ENCODE measurements at regions of chr12 and their contacts with region 1.

Region 1: DNA sequence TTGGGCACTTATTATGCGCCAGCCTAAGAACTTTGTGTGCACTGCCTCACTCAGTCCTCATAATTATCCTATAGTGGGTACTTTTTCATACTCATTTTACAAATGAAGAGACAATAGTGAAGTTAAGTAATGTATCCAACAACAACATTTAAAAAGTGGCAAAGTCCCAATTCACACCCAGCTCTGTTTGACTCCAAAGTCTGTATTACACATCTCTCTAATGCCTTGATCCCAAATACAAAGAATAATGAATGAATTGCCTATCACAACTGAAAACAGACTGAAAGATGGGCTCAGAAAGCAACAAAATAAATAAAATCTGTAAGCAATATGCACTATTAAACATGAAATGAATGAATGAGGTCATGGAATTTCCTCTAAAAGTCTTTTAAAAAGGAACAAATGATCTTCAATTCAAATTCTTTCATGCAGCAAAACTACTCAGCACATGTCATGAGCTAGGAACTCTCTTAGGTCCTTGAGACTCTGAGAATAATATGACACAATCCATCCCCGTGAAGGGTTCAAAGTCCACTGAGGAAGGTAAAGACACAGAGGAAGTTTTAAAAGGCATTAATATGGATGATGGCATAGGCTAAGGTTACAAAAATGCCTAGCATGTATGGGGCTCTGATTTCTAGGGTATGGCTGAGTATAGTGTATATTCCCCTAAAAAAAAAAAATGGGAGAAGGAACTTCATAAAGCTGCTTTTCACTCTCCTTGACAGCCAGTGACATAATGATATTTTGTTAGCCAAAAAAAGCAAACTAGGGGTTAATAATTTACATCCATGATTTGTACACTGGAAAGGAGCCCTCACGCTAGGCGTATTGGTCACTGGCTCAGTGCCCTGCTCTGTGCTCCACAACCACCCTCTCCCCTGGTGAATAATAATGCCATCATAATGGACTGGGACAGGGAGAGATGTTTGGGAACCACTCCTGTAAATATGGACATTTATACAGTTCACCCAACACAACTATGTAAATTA is 103.4 kb downstream of the SLC2A13 start:
- DNase-seq: no peak
- ATAC-seq: no peak
- H3K4me3 Mint-ChIP-seq: no peak overlapping the region
- H3K27ac Mint-ChIP-seq: no peak overlapping the region
- H3K4me1 Mint-ChIP-seq: no peaks in the 10 kb centered on the region
- H3K27me3 Mint-ChIP-seq: no peaks in the 10 kb centered on the region

Region 2: DNA sequence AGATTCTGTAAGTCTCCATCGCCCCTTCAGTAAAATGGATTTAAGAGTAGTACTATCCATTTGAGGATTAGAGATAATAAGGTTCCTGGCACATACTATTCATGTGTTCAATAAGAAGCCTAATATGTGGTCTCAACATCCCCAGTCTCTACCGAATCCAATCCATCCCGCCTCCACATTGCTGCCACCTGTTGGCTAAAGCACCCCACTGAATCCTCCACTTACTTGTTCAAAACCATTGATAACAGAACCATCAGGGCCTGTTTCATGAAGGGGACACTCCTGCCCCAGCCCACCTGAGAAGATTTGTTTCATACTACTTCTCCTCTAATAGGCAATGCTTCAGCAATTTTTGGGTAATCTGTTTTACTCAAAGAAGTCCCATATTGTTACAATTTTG is 44.1 kb before region 1 on chr12:
- CTCF ChIA-PET with region 1: no interaction called
- POLR2A ChIA-PET with region 1: no interaction called
- intact Hi-C with region 1: loop called in 1 of 2 experiments (anchors 5 kb)
- DNase-seq: peak; percentile 26
- ATAC-seq: no peak
- H3K4me3 Mint-ChIP-seq: no peak overlapping the region
- H3K27ac Mint-ChIP-seq: no peak overlapping the region
- H3K4me1 Mint-ChIP-seq: no peaks in the 10 kb centered on the region
- H3K27me3 Mint-ChIP-seq: no peaks in the 10 kb centered on the region

Region 3: DNA sequence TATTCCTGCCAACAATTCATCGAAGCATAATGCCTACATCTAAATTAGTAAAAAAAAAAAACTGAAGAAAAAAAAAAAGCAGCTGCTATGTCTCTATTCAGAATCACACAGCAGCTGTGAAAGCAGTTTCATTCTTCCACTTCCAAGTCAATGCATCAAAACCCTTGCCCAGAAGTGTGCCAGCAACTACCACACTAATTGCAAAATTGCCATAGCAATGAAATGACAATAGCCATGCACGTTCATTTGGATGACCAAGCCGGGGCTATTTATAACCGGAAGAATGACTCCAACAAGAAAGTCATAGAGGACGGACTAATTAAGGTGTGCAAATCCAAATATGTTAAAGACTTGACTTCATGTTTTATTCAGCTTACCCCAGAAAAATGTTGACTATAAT is 60.9 kb after region 1 on chr12:
- CTCF ChIA-PET with region 1: no interaction called
- POLR2A ChIA-PET with region 1: no interaction called
- intact Hi-C with region 1: no loop called
- DNase-seq: no peak
- ATAC-seq: no peak
- H3K4me3 Mint-ChIP-seq: no peak overlapping the region
- H3K27ac Mint-ChIP-seq: no peak overlapping the region
- H3K4me1 Mint-ChIP-seq: no peaks in the 10 kb centered on the region
- H3K27me3 Mint-ChIP-seq: no peaks in the 10 kb centered on the region

Measured in activated CD4-positive, alpha-beta T cell treated with anti-CD3 and anti-CD28 coated beads for 36 hours (primary cell).